ENCODE measurements at regions of chr15 and their contacts with region 1.

Region 1: GRCh38 chr15:51776952-51777574 is 25.7 kb downstream of the TMOD2 start:
- DNase-seq: peak; percentile 26 to 86
- ATAC-seq: peak; percentile 72 to 81 (median 78)
- H3K4me3 ChIP-seq: no peak overlapping the region
- H3K4me3 Mint-ChIP-seq: no peak overlapping the region
- H3K27ac ChIP-seq: no peak overlapping the region
- H3K27ac Mint-ChIP-seq: no peak overlapping the region
- H3K4me1 ChIP-seq: no peaks in the 10 kb centered on the region
- H3K4me1 Mint-ChIP-seq: no peaks in the 10 kb centered on the region
- H3K27me3 ChIP-seq: no peaks in the 10 kb centered on the region
- H3K27me3 Mint-ChIP-seq: peaks cover 0 to under 1% of the 10 kb centered on the region in 2 donors
- CTCF ChIP-seq: peak; percentile 69

Region 2: GRCh38 chr15:51649659-51650521 is 127.2 kb before region 1 on chr15:
- intact Hi-C with region 1: loop called (anchors 1 kb)
- DNase-seq: peak in 1 of 2 donors; percentile 87
- ATAC-seq: peak; percentile 72 to 86 (median 79)
- H3K4me3 ChIP-seq: no peak overlapping the region
- H3K4me3 Mint-ChIP-seq: no peak overlapping the region
- H3K27ac ChIP-seq: no peak overlapping the region
- H3K27ac Mint-ChIP-seq: no peak overlapping the region
- H3K4me1 ChIP-seq: no peaks in the 10 kb centered on the region
- H3K4me1 Mint-ChIP-seq: no peaks in the 10 kb centered on the region
- H3K27me3 ChIP-seq: no peaks in the 10 kb centered on the region
- H3K27me3 Mint-ChIP-seq: peaks cover 7 to 11% of the 10 kb centered on the region in 2 donors
- CTCF ChIP-seq: peak; percentile 94

Region 3: DNA sequence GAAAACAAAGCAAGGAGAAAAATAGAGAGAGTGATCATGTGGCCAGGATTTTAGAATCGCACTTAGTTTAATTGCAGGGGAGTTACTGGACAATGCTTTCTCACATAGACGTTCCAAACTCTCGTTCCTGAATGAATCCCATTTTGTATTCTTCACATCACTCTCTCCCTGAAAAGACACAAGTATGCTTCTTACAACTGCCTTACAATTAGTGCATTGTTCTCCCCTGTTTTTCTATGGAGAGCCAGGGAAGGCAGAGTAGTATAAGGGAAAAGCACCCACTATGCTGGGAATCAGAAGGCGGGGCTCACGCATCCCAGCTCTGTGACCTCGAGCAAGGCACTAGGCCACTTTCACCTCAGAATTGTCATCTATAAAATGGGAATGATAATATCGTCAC is 11.3 kb before region 1 on chr15:
- intact Hi-C with region 1: no loop called
- DNase-seq: no peak
- ATAC-seq: no peak
- H3K4me3 ChIP-seq: no peak overlapping the region
- H3K4me3 Mint-ChIP-seq: no peak overlapping the region
- H3K27ac ChIP-seq: no peak overlapping the region
- H3K27ac Mint-ChIP-seq: no peak overlapping the region
- H3K4me1 ChIP-seq: peaks cover 6% of the 10 kb centered on the region
- H3K4me1 Mint-ChIP-seq: peaks cover 0 to 6% of the 10 kb centered on the region in 2 donors
- H3K27me3 ChIP-seq: no peaks in the 10 kb centered on the region
- H3K27me3 Mint-ChIP-seq: no peaks in the 10 kb centered on the region
- CTCF ChIP-seq: no peak